ENCODE measurements at regions of chr9 and their contacts with region 1.

Region 1: DNA sequence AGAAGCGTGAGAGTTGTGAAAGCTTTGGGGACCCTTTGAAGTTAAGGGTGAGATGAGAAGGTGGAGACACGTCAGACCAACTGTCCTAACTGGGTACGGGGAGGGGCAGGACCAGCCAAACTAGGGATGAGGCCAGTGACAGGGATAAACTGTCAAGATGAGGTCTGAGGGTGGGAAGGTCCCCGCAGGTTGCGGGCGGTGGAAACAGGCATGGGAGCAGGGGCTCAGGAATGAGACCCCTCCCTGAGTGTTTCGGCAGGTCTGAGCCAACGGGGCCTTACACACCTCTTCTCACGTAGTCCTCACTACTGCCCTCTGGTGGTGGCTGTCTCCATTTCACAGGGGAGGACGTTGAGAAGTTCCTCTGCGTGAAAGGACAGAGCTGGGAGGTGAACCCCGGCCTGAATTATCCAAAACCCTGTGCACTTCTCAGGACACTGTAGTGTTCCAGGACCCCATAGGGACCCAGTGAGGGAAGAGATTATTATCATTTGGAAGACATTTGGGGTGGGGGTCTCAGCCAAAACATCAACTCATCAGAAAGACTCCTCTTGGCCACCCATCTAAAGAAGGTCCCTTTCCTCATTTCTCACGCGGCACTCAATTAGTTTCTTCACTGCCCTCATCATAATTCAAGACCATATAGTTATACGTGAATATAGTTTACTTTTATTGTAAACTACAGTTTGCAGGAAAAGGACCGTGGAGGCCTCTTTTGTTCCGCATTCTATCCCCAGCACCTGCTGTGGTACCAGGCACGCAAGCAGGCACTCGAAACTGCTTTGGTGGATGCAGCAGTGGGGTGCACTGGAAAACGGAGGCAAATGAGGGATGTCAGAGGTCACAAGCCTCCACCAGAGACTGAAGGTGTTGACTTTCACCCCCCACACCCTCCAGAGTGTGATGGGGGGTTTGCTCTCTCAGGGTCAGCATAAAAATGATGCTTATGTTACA is 21.7 kb upstream of the NANS start:
- DNase-seq: peak; percentile 93
- ATAC-seq: peak; percentile 96
- H3K4me3 Mint-ChIP-seq: no peak overlapping the region; the same call in 1 of the 2 replicates
- H3K27ac Mint-ChIP-seq: no peak overlapping the region
- H3K4me1 Mint-ChIP-seq: peaks cover 5% of the 10 kb centered on the region; the same call in 1 of the 2 replicates
- H3K27me3 Mint-ChIP-seq: peaks cover 21% of the 10 kb centered on the region
- CTCF ChIP-seq: peak; percentile 94

Region 2: DNA sequence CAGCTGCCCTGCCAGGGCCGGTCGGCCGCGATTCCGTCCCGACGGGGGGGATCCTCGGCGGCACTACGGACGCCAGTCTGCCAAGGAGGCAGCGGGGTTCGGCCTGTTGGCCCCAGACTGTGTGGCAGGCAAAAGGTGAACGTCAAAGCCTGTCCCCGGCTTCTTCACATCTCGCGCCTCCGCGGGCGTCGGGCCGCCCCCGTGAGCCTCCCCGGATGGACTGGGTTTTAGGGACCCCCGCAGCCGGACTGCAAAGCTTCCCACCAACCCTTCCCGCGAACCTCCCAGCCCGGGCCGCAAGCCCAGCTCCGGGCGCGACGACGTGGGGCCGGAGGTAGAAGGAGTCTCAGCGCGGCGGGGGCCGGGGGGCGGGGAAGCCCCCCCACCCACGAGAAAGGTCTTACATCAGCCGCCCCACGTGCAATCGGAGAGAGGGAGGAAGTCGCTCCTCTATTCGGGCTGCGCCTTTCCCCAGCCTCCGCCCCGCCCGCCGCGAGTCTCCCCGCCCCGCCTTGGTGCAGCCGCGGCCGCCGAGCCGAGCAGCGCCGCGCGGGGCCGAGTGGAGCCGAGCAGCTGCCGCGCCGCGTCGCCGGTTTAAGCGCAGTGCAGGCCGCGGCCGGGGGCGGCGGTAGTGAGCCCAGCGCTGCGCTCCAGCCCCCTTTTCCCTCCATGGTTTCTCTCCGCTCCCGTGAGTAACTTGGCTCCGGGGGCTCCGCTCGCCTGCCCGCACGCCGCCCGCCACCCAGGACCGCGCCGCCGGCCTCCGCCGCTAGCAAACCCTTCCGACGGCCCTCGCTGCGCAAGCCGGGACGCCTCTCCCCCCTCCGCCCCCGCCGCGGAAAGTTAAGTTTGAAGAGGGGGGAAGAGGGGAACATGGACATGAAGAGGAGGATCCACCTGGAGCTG is 51.9 kb before region 1 on chr9 and contains the start of gene ANP32B:
- CTCF ChIA-PET with region 1: interaction called, 11 read pairs
- POLR2A ChIA-PET with region 1: no interaction called
- DNase-seq: peak; percentile 85
- ATAC-seq: peak; percentile 87
- H3K4me3 Mint-ChIP-seq: peak within 1 kb of the TSS; percentile 67
- H3K27ac Mint-ChIP-seq: no peak within 1 kb of the TSS
- H3K4me1 Mint-ChIP-seq: peaks cover 22% of the 10 kb centered on the region
- H3K27me3 Mint-ChIP-seq: peaks cover 64% of the 10 kb centered on the region
- CTCF ChIP-seq: peak; percentile 92
- total RNA-seq, gene ANP32B: 149 to 156 TPM (median 150 TPM) in 3 replicates

Region 3: GRCh38 chr9:98024702-98025101 is 10.2 kb before region 1 on chr9:
- CTCF ChIA-PET with region 1: interaction called, 17 read pairs
- POLR2A ChIA-PET with region 1: no interaction called
- DNase-seq: no peak
- ATAC-seq: no peak
- H3K4me3 Mint-ChIP-seq: no peak overlapping the region
- H3K27ac Mint-ChIP-seq: peak overlapping the region; percentile 3; the same call in 1 of the 2 replicates
- H3K4me1 Mint-ChIP-seq: peaks cover 3% of the 10 kb centered on the region; the same call in 1 of the 2 replicates
- H3K27me3 Mint-ChIP-seq: no peaks in the 10 kb centered on the region
- CTCF ChIP-seq: no peak

Region 4: DNA sequence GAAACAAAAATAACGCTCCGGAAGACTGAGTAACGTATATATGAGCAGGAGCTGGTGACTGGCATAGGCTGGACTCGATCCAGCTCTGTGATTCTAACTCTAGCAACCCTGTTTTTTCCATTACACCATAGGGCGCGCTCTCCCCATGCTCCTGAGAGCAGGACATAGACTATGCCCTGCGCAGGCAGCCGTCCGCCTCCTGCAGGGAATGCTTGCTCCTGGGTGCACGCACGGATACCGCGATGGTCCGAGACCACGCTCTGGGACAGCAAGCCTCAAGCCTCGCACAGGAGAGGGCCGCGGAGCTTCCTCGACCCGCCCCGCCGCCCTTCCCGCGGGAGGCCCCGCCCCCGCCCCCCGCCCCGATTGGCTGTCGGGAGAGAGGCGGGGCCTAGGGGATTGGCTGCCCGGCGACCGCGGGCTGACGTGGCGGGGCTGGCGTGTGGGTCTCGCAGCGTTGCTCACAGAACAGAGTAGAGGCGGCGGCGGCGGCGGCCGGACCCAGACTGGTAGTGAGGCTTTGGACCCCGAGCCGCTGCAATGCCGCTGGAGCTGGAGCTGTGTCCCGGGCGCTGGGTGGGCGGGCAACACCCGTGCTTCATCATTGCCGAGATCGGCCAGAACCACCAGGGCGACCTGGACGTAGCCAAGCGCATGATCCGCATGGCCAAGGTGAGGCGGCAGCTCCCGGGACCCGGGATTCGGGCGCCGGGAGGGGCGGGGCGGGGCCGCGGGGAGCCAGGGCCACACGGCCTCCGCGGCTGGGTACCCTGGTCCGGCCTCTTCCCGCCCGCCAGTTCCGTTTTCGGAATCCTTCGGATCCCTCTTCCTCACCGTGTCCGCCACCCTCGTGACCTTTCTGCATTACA is 21.6 kb after region 1 on chr9 and contains the start of gene NANS:
- CTCF ChIA-PET with region 1: interaction called, 17 read pairs
- POLR2A ChIA-PET with region 1: no interaction called
- DNase-seq: peak; percentile 91
- ATAC-seq: peak; percentile 94
- H3K4me3 Mint-ChIP-seq: peak within 1 kb of the TSS; percentile 89
- H3K27ac Mint-ChIP-seq: peak within 1 kb of the TSS; percentile 57; the same call in 1 of the 2 replicates
- H3K4me1 Mint-ChIP-seq: no peaks in the 10 kb centered on the region
- H3K27me3 Mint-ChIP-seq: peaks cover 25% of the 10 kb centered on the region
- CTCF ChIP-seq: no peak
- total RNA-seq, gene NANS: 57.9 to 66.7 TPM (median 61.3 TPM) in 3 replicates

Region 5: GRCh38 chr9:98099898-98100297 is 65.0 kb after region 1 on chr9:
- CTCF ChIA-PET with region 1: no interaction called
- POLR2A ChIA-PET with region 1: no interaction called
- DNase-seq: no peak
- ATAC-seq: no peak
- H3K4me3 Mint-ChIP-seq: no peak overlapping the region
- H3K27ac Mint-ChIP-seq: no peak overlapping the region; the same call in 1 of the 2 replicates
- H3K4me1 Mint-ChIP-seq: peaks cover 13% of the 10 kb centered on the region
- H3K27me3 Mint-ChIP-seq: no peaks in the 10 kb centered on the region
- CTCF ChIP-seq: no peak

Measured in WTC11 (cell line).